ENCODE measurements at regions of chr1 and their contacts with region 1.

Region 1: GRCh38 chr1:26833432-26834405 is 7.2 kb downstream of the ZDHHC18 start:
- DNase-seq: peak; percentile 97
- H3K4me3 Mint-ChIP-seq: peak overlapping the region; percentile 70
- H3K27ac Mint-ChIP-seq: peak overlapping the region; percentile 92
- H3K4me1 Mint-ChIP-seq: peaks cover 66% of the 10 kb centered on the region
- H3K27me3 Mint-ChIP-seq: no peaks in the 10 kb centered on the region

Region 2: GRCh38 chr1:26811057-26811456 is 22.7 kb before region 1 on chr1:
- intact Hi-C with region 1: loop called (anchors 2 kb)
- DNase-seq: no peak
- H3K4me3 Mint-ChIP-seq: no peak overlapping the region
- H3K27ac Mint-ChIP-seq: no peak overlapping the region
- H3K4me1 Mint-ChIP-seq: peaks cover 17% of the 10 kb centered on the region
- H3K27me3 Mint-ChIP-seq: no peaks in the 10 kb centered on the region

Region 3: DNA sequence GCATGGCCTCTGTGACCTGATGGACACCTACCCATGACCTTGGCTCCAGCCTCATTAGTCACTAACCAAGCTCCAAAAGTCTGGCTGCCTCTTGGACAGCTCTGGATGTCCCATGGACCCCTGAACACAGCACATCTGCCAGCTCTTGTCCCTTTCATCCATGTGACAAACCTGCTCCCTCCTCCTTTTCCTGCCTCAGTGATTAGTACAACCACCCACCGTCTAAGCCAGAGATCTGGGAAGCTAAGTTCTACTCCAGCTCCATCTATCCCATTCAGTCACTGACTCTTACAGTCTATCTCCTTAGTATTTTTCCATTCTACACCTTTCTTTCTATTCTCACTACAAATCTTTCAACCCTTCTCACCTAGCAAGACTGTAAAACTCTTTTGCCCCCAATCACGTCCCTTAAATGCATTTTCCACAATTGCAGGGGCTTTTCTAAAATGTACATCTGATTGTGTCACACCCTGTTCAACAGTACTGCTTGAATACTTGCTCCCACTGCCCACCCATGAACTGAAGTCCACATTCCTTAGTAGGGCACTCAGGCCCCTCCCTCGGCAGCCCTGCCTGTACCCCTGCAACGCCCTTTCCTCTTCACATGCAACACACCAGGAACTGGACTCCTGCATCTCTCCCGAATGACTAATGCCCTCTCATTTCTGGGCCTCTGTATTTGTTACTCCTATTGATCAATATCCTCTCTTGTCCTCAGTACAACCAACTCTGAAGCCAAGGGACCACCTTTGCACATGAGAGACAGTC is 49.2 kb after region 1 on chr1:
- intact Hi-C with region 1: no loop called
- DNase-seq: no peak
- H3K4me3 Mint-ChIP-seq: no peak overlapping the region
- H3K27ac Mint-ChIP-seq: no peak overlapping the region
- H3K4me1 Mint-ChIP-seq: peaks cover 2% of the 10 kb centered on the region
- H3K27me3 Mint-ChIP-seq: no peaks in the 10 kb centered on the region